H1 (cell line): ENCODE measurements at regions of chr5 and their contacts with region 1.

Region 1: DNA sequence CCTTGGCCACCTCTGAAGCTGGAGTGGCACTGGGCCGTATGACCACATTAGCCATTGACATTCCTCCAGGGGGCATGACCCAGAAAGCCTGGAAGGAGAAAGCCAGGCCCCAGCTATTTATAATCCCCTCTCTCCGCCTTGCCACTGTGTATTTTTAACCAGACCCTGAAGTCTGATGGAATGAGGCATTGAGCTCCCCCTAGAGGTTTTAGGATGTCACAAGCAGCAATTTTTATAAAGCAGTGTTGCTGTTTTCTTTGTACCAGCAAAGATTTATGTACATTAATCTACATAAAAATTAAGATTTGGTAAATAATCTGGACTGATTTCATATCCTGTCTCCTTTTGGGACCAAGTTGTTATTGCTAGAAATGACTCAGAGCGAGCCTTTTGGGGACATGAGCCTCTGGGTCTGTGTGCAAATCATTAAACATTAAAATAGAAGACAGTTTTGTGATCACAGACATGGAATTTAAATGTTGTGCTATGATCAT is 127.1 kb downstream of the TRIO start:
- DNase-seq: no peak
- H3K4me3 ChIP-seq: no peak overlapping the region; a peak in 1 of 8 replicates
- H3K27ac ChIP-seq: peak overlapping the region; percentile 64; the same call in 1 of the 2 replicates
- H3K4me1 ChIP-seq: peaks cover 9 to 27% (median 19%) of the 10 kb centered on the region in 4 experiments
- H3K27me3 ChIP-seq: no peaks in the 10 kb centered on the region
- CTCF ChIP-seq: peak in 2 of 3 experiments; percentile 66 to 73; a peak in 3 of 4 replicates
- EP300 ChIP-seq: no peak
- POLR2A ChIP-seq: no peak
- RAD21 ChIP-seq: peak; percentile 77 to 81

Region 2: DNA sequence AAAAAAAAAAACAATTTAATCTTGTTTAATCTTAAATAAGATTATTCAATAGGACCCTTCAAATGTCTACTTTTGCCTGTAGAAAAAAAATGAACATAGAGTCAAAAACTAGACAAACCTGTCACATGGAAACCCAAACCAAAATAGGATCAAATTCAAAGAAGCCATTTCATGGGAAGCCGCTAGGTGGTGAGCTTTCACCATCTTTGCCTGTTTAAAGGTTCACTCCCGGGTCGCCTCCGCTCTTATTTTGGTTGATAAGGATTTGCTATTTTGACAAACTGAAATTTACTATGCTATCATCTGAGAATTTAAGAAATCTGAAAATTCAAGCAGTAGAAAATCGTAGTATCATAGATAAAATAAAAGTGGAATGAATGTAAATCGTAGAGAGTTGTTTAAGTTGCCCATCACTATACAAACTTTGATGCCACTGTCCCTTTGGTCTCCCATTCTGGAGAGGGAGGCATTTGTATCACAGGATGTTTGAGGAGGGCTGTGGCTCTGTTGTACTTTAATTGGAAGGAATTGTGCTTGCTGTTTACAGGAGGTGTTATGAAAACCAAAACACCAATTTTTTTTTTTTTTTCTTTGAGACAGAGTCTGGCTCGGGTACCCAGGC is 282.3 kb before region 1 on chr5:
- CTCF ChIA-PET with region 1: interaction called, 13 read pairs
- POLR2A ChIA-PET with region 1: no interaction called
- DNase-seq: peak in 1 of 2 experiments; percentile 60
- H3K4me3 ChIP-seq: no peak overlapping the region
- H3K27ac ChIP-seq: no peak overlapping the region
- H3K4me1 ChIP-seq: no peaks in the 10 kb centered on the region
- H3K27me3 ChIP-seq: no peaks in the 10 kb centered on the region
- CTCF ChIP-seq: peak; percentile 34 to 79 (median 72)
- EP300 ChIP-seq: no peak
- POLR2A ChIP-seq: no peak
- RAD21 ChIP-seq: peak; percentile 95 to 96

Region 3: GRCh38 chr5:14101922-14102321 is 168.3 kb before region 1 on chr5:
- CTCF ChIA-PET with region 1: interaction called, 10 read pairs
- POLR2A ChIA-PET with region 1: no interaction called
- DNase-seq: no peak
- H3K4me3 ChIP-seq: no peak overlapping the region
- H3K27ac ChIP-seq: no peak overlapping the region
- H3K4me1 ChIP-seq: peaks cover 0 to 6% (median 0%) of the 10 kb centered on the region in 4 experiments; a peak in 1 of 7 replicates
- H3K27me3 ChIP-seq: no peaks in the 10 kb centered on the region
- CTCF ChIP-seq: no peak
- EP300 ChIP-seq: no peak
- POLR2A ChIP-seq: 0 out of 3 replicates have a peak, but pooled peaks of 1 of the 2 experiments have one; percentile 37
- RAD21 ChIP-seq: no peak

Region 4: DNA sequence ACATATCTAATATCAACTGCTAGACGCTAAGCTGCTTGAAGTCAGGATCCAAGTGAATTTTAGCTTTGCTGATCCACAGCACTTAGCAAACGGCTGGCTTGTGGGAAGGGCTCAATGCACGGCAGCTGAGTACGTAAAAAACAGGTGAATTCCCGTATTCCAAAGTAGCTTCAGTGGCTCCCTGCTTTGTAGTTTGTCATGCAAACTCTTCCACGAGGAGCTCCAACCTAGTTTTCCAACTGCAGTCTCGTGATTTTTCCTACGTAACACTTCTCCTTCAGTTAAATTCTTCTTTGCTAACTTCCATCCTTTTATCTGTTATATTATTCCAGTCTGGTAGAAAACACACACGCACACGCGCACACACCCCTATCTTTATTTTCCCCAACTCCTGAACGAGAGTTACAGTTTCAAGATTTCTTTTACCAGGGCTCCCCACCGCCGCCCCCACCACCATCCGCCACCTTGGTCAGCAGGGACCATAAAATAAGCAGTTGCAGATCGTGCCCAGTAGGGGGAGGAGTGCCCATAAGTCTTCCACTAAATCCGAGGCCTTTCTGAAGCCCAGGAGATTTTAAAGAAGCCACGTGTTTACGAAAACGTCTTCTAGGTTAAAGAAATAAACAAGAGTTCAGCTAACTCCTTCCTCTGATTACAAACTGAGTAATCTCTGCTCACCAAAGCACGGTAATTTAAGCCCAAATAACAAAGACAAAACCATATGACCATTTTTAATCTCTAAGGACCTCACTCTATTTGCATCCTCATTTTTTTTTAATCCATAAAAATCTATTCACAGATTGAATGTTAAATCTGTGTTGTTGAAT is 161.9 kb before region 1 on chr5:
- CTCF ChIA-PET with region 1: interaction called, 13 read pairs
- POLR2A ChIA-PET with region 1: no interaction called
- DNase-seq: peak; percentile 62 to 65
- H3K4me3 ChIP-seq: peak overlapping the region; percentile 18 to 53 (median 37); a peak in 7 of 8 replicates
- H3K27ac ChIP-seq: no peak overlapping the region
- H3K4me1 ChIP-seq: peaks cover 0 to 3% (median 1%) of the 10 kb centered on the region in 4 experiments; a peak in 3 of 7 replicates
- H3K27me3 ChIP-seq: no peaks in the 10 kb centered on the region; a peak in 2 of 7 replicates
- CTCF ChIP-seq: peak; percentile 70 to 75 (median 72)
- EP300 ChIP-seq: no peak
- POLR2A ChIP-seq: no peak; a peak in 1 of 3 replicates
- RAD21 ChIP-seq: peak; percentile 79 to 83

Region 5: DNA sequence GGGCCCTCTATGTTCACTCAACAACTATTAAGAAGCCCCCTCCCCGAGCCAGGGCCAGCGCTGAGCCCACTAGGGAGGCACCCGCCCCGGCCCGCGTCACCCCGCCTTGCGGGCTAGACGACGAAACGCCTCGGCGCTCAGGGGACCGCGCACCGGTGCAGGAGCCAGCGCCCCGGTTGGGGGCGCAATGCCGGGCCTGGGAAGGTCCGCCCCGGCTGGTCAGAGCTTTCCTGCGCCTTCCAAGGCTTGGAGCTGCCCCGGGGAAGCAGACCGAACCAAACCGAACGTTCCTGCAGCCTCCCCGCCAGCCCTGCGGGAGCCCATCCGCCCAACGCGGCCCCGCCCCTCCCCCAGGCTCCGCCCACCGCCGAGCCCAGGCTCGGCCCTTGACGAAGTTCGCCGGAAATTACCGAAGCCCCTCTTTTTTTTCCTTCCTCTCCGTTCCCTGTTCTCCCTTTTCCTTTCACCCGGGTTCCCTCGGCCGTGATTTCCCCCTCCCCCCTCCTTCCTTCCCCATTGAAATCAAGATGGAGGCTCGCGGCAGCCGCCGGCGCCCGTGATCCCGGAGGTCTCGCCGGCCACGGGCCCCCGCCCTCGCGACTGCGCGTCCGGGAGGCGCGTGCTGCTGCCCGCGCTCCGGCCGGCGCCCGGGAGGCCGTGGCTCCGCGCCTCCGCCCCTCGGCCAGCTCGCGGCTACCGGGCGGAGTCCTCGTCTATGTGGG is 127.3 kb before region 1 on chr5 and contains the start of gene TRIO:
- CTCF ChIA-PET with region 1: interaction called, 30 read pairs
- POLR2A ChIA-PET with region 1: interaction called, 8 read pairs
- DNase-seq: peak; percentile 85 to 99
- H3K4me3 ChIP-seq: peak within 1 kb of the TSS; percentile 88 to 98 (median 94)
- H3K27ac ChIP-seq: peak within 1 kb of the TSS; percentile 42; the same call in 1 of the 2 replicates
- H3K4me1 ChIP-seq: peaks cover 5 to 20% (median 10%) of the 10 kb centered on the region in 4 experiments; a peak in 6 of 7 replicates
- H3K27me3 ChIP-seq: peaks cover 0 to 2% (median 0%) of the 10 kb centered on the region in 4 experiments; a peak in 1 of 7 replicates
- CTCF ChIP-seq: peak; percentile 46 to 70 (median 54)
- EP300 ChIP-seq: no peak
- POLR2A ChIP-seq: peak; percentile 37 to 63
- RAD21 ChIP-seq: peak; percentile 42 to 57; a peak in 3 of 4 replicates
- total RNA-seq, gene TRIO: 69.1 and 70.4 TPM in 2 replicates

Region 6: GRCh38 chr5:14153932-14154731 is 116.1 kb before region 1 on chr5:
- CTCF ChIA-PET with region 1: interaction called, 14 read pairs
- POLR2A ChIA-PET with region 1: no interaction called
- DNase-seq: no peak
- H3K4me3 ChIP-seq: no peak overlapping the region
- H3K27ac ChIP-seq: no peak overlapping the region
- H3K4me1 ChIP-seq: peaks cover 10 to 31% (median 20%) of the 10 kb centered on the region in 4 experiments; a peak in 6 of 7 replicates
- H3K27me3 ChIP-seq: no peaks in the 10 kb centered on the region
- CTCF ChIP-seq: no peak
- EP300 ChIP-seq: no peak
- POLR2A ChIP-seq: no peak
- RAD21 ChIP-seq: no peak

Region 7: GRCh38 chr5:14258840-14259239 is 11.4 kb before region 1 on chr5:
- CTCF ChIA-PET with region 1: interaction called, 23 read pairs
- POLR2A ChIA-PET with region 1: interaction called, 5 read pairs
- DNase-seq: no peak
- H3K4me3 ChIP-seq: peak overlapping the region in 1 of 4 experiments; percentile 42; a peak in 2 of 8 replicates
- H3K27ac ChIP-seq: peak overlapping the region; percentile 11; the same call in 1 of the 2 replicates
- H3K4me1 ChIP-seq: peaks cover 19 to 52% (median 47%) of the 10 kb centered on the region in 4 experiments
- H3K27me3 ChIP-seq: no peaks in the 10 kb centered on the region
- CTCF ChIP-seq: peak; percentile 32 to 57 (median 45)
- EP300 ChIP-seq: no peak
- POLR2A ChIP-seq: no peak
- RAD21 ChIP-seq: peak; percentile 47 to 59

Region 8: DNA sequence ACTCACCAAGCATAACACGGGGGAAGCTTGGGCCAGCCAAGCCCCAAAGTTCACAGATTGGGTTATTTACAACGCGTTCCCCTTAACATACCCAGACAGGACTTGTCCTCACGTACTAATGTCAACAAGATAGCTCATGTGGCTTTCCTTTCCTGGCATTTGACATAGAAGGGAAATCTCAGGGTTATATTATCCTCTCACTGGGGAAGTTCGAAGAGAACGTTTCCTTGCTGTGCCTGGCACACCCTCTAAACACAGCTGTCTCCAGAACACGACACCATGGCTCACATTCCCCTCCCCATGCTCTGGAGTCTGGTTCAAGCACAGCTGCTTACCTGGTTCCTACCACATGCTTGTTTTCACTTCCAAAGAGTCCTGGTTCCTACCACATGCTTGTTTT is 264.5 kb after region 1 on chr5:
- CTCF ChIA-PET with region 1: no interaction called
- POLR2A ChIA-PET with region 1: no interaction called
- DNase-seq: no peak
- H3K4me3 ChIP-seq: no peak overlapping the region
- H3K27ac ChIP-seq: no peak overlapping the region
- H3K4me1 ChIP-seq: peaks cover 0 to 7% (median under 1%) of the 10 kb centered on the region in 4 experiments; a peak in 1 of 7 replicates
- H3K27me3 ChIP-seq: no peaks in the 10 kb centered on the region; a peak in 1 of 7 replicates
- CTCF ChIP-seq: no peak
- EP300 ChIP-seq: no peak
- POLR2A ChIP-seq: no peak
- RAD21 ChIP-seq: no peak